Spleen (tissue), 13 donors: ENCODE measurements at regions of chr10 and their contacts with region 1.

Region 1: GRCh38 chr10:97210543-97210961 is 24.8 kb upstream of the SLIT1 start:
- DNase-seq: peak; percentile 80
- H3K4me3 ChIP-seq: no peak overlapping the region
- H3K27ac ChIP-seq: no peak overlapping the region
- H3K4me1 ChIP-seq: no peaks in the 10 kb centered on the region
- H3K27me3 ChIP-seq: peaks cover 0 to 7% (median 0%) of the 10 kb centered on the region in 7 donors
- CTCF ChIP-seq: peak; percentile 84 to 96 (median 94)
- POLR2A ChIP-seq: no peak

Region 2: GRCh38 chr10:97072851-97073665 is 137.5 kb before region 1 on chr10:
- intact Hi-C with region 1: loop called (anchors 2 kb)
- DNase-seq: peak; percentile 90
- H3K4me3 ChIP-seq: no peak overlapping the region
- H3K27ac ChIP-seq: no peak overlapping the region
- H3K4me1 ChIP-seq: peaks cover 0 to 8% (median 0%) of the 10 kb centered on the region in 6 donors
- H3K27me3 ChIP-seq: peaks cover 0 to 71% (median 4%) of the 10 kb centered on the region in 7 donors
- CTCF ChIP-seq: peak; percentile 73 to 93 (median 90)
- POLR2A ChIP-seq: no peak

Region 3: DNA sequence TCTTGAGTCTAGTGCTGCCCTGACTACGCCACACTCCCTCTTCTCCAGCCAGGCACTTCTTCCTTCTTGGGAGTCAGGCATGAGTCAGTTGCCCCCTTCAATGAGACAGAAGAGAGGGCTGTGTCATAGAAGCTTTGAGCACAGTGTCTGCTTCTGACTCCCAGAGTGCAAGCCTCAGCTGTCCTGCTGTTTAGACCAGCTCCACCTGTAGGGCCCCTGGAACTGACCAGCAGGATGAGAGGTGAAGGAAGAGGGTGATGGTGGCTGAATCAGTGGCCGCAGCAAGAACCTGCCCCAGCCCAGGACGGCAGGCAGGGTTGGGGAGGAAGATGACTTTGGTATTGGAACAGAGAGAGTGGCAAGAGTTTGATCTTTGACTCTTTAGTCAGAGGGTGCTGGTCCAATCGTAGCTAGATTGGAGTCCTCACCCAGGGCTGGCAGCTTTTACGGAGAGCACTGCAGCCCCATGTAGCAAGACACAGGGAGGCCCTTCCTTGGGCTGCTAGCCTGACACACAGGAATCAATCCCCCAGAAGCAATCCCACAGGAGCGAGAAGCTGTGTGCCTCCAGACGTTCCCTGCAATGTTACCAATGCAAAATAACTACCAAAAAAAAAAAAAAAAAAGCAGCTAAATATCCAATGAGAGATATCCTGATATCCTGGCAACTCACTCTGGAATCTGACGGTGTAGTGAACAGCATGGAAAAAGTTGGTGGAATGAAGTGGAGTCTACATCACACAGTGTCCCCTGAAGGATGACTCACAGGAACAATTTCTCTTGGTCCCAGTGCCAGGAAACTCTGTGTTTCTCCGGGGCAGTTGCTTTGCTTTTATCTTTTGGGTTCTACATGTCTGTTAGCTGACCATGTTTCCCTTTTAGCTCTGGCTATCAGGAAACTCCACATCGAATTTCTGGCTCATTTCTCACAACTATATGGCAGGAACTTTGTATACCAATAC is 385.8 kb after region 1 on chr10:
- intact Hi-C with region 1: no loop called
- DNase-seq: no peak
- H3K4me3 ChIP-seq: no peak overlapping the region
- H3K27ac ChIP-seq: peak overlapping the region in 4 of 8 donors; percentile 14 to 58 (median 32)
- H3K4me1 ChIP-seq: peaks cover 0 to 11% (median 0%) of the 10 kb centered on the region in 6 donors
- H3K27me3 ChIP-seq: no peaks in the 10 kb centered on the region
- CTCF ChIP-seq: no peak
- POLR2A ChIP-seq: no peak